BJ (cell line): ENCODE measurements at regions of chr5 and their contacts with region 1.

Region 1: GRCh38 chr5:923281-923873 is 30.7 kb downstream of the TRIP13 start:
- DNase-seq: no peak
- H3K4me3 ChIP-seq: no peak overlapping the region
- H3K27me3 ChIP-seq: peaks cover 3% of the 10 kb centered on the region; the same call in 1 of the 2 replicates
- CTCF ChIP-seq: peak; percentile 95

Region 2: GRCh38 chr5:149741-150485 is 773.5 kb before region 1 on chr5:
- CTCF ChIA-PET with region 1: no interaction called
- POLR2A ChIA-PET with region 1: no interaction called
- DNase-seq: no peak
- H3K4me3 ChIP-seq: no peak overlapping the region
- H3K27me3 ChIP-seq: no peaks in the 10 kb centered on the region; the same call in 1 of the 2 replicates
- CTCF ChIP-seq: no peak

Region 3: GRCh38 chr5:285639-286557 is 637.5 kb before region 1 on chr5:
- CTCF ChIA-PET with region 1: no interaction called
- POLR2A ChIA-PET with region 1: interaction called, 17 read pairs
- DNase-seq: no peak
- H3K4me3 ChIP-seq: no peak overlapping the region
- H3K27me3 ChIP-seq: no peaks in the 10 kb centered on the region
- CTCF ChIP-seq: no peak

Region 4: GRCh38 chr5:902129-902916 is 21.1 kb before region 1 on chr5:
- CTCF ChIA-PET with region 1: interaction called, 24 read pairs
- POLR2A ChIA-PET with region 1: no interaction called
- DNase-seq: no peak
- H3K4me3 ChIP-seq: no peak overlapping the region
- H3K27me3 ChIP-seq: no peaks in the 10 kb centered on the region
- CTCF ChIP-seq: no peak

Region 5: DNA sequence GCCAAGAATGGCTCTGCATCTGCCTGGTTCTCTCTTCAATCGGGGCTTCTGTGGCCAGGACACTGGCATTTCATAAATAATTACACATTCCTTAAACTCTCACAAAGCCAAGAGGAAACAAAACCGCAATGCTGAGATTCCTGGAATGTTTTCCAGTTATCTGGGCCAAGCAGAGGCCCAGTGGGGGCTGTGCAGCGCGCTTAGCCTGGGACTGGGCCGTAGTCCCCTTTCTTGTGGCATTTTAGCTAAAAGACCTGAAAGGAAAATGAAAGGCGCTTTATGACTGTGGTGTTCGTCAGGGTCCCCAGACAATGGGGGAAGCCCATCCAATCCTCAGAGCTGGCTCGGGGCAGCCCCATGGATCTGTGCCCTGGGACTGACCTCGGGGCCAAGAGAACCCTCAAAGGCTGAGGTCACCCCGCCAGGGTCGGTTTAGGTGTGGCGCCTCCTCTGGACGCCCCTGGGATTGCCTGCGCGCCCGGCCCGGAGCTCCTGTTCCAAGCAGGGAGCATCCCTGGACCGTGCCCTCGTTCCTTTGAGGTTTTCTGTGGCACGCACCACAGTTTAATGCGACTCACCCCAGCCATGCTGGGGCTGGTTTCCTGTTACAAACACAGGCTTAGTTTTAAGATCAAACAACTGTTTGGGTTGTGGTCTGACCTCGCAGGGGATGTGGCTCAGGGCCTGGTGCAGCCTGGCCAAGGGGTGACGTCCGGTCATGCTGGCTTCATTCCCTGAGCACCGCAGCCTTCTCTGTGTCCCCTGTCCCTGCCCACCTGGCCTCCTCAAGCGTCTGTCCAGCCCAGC is 33.8 kb after region 1 on chr5:
- CTCF ChIA-PET with region 1: interaction called, 12 read pairs
- POLR2A ChIA-PET with region 1: no interaction called
- DNase-seq: peak; percentile 77
- H3K4me3 ChIP-seq: no peak overlapping the region
- H3K27me3 ChIP-seq: peaks cover 34% of the 10 kb centered on the region
- CTCF ChIP-seq: peak; percentile 71

Region 6: GRCh38 chr5:1140171-1140817 is 216.9 kb after region 1 on chr5:
- CTCF ChIA-PET with region 1: interaction called, 29 read pairs
- POLR2A ChIA-PET with region 1: no interaction called
- DNase-seq: no peak
- H3K4me3 ChIP-seq: no peak overlapping the region
- H3K27me3 ChIP-seq: no peaks in the 10 kb centered on the region; the same call in 1 of the 2 replicates
- CTCF ChIP-seq: peak; percentile 83

Region 7: GRCh38 chr5:1167728-1168709 is 244.6 kb after region 1 on chr5:
- CTCF ChIA-PET with region 1: interaction called, 54 read pairs
- POLR2A ChIA-PET with region 1: no interaction called
- DNase-seq: peak; percentile 9
- H3K4me3 ChIP-seq: no peak overlapping the region
- H3K27me3 ChIP-seq: no peaks in the 10 kb centered on the region
- CTCF ChIP-seq: peak; percentile 83

Region 8: DNA sequence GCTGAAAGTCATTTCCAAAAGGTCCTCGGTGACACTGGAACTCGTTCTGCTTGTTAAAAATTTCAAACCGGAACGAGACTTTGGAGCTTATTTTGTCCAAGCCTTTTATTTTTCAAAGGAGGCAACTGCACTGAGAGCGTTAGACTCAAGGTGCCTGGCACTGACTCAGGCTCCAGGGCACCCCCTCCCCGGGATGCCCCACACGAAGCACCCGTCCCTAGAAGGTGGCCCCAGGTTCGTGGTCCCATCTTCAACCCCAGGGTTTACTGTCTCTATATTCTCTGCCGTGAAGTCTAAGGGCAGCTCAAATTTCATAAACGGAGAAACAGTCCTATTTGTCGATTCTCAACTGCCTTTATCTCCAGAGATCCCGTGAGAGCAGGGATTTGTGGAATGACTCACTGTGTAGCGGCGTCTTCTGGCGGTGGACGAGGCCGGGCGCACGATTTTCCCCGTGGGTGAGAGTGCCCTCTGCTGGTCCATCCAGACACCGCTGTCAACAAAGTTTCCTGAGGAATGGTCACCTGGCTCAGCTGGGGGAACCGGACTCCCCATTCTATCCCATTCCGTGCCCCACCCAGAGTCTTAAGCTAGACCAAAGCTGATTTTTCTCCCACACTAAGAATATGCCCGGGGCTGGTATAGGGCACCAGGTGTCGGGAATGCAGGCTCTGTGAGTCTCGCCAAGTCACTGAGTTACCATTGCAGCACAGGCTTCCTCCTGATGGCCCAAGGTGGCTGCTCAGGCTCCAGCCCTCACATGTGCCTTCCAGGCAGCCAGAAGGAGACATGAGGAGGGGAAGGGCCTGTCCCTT is 251.0 kb after region 1 on chr5:
- CTCF ChIA-PET with region 1: interaction called, 54 read pairs
- POLR2A ChIA-PET with region 1: no interaction called
- DNase-seq: peak; percentile 25
- H3K4me3 ChIP-seq: no peak overlapping the region
- H3K27me3 ChIP-seq: no peaks in the 10 kb centered on the region
- CTCF ChIP-seq: peak; percentile 85